A549 (cell line): ENCODE measurements at regions of chr7 and their contacts with region 1.

Region 1: GRCh38 chr7:31373337-31374289 is 33.1 kb upstream of the NEUROD6 start:
- DNase-seq: peak; percentile 76 to 78
- ATAC-seq: peak; percentile 98 to 99
- H3K4me3 ChIP-seq: no peak overlapping the region
- H3K27ac ChIP-seq: peak overlapping the region in 1 of 2 experiments; percentile 19; a peak in 3 of 6 replicates
- H3K4me1 ChIP-seq: no peaks in the 10 kb centered on the region
- CTCF ChIP-seq: peak; percentile 91
- EP300 ChIP-seq: no peak
- POLR2A ChIP-seq: no peak
- RAD21 ChIP-seq: peak; percentile 94 to 95

Region 2: GRCh38 chr7:31192986-31193385 is 180.6 kb before region 1 on chr7:
- CTCF ChIA-PET with region 1: interaction called, 35 read pairs
- POLR2A ChIA-PET with region 1: no interaction called
- DNase-seq: peak; percentile 61 to 66
- ATAC-seq: peak; percentile 100
- H3K4me3 ChIP-seq: no peak overlapping the region
- H3K27ac ChIP-seq: no peak overlapping the region
- H3K4me1 ChIP-seq: no peaks in the 10 kb centered on the region
- CTCF ChIP-seq: peak; percentile 76
- EP300 ChIP-seq: no peak
- POLR2A ChIP-seq: no peak
- RAD21 ChIP-seq: peak; percentile 85 to 86

Region 3: DNA sequence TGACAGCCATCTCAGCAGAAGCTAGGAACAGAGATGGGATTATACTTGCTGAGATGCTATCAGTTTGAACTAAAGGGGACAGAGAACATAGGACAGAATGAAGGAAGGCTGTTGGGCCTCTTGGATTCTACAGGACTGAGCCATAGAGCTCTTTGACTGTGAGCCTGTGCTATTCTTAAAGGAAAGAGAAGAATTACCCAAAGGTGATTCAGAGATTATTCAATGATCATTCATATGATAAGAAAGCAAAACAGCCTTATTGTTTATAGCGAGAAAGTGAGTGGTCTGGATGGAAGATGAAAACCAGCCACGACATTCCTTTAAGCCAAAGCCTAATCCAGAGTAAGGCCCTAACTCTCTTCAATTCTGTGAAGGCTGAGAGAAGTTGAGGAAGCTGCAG is 36.7 kb after region 1 on chr7:
- CTCF ChIA-PET with region 1: interaction called, 13 read pairs
- POLR2A ChIA-PET with region 1: no interaction called
- DNase-seq: no peak
- ATAC-seq: peak in 1 of 2 experiments; percentile 23; a peak in 2 of 6 replicates
- H3K4me3 ChIP-seq: no peak overlapping the region
- H3K27ac ChIP-seq: peak overlapping the region; percentile 13 to 85; a peak in 4 of 6 replicates
- H3K4me1 ChIP-seq: peaks cover 29% of the 10 kb centered on the region
- CTCF ChIP-seq: no peak
- EP300 ChIP-seq: no peak
- POLR2A ChIP-seq: no peak
- RAD21 ChIP-seq: no peak

Region 4: GRCh38 chr7:31443457-31443856 is 69.8 kb after region 1 on chr7:
- CTCF ChIA-PET with region 1: interaction called, 83 read pairs
- POLR2A ChIA-PET with region 1: no interaction called
- DNase-seq: peak; percentile 60 to 68
- ATAC-seq: peak; percentile 84 to 93
- H3K4me3 ChIP-seq: no peak overlapping the region
- H3K27ac ChIP-seq: no peak overlapping the region
- H3K4me1 ChIP-seq: no peaks in the 10 kb centered on the region
- CTCF ChIP-seq: peak; percentile 90
- EP300 ChIP-seq: no peak
- POLR2A ChIP-seq: no peak
- RAD21 ChIP-seq: peak; percentile 80 to 86

Region 5: GRCh38 chr7:31488562-31489203 is 115.1 kb after region 1 on chr7:
- CTCF ChIA-PET with region 1: interaction called, 128 read pairs
- POLR2A ChIA-PET with region 1: no interaction called
- DNase-seq: peak; percentile 65 to 69
- ATAC-seq: peak; percentile 98 to 100
- H3K4me3 ChIP-seq: no peak overlapping the region
- H3K27ac ChIP-seq: no peak overlapping the region
- H3K4me1 ChIP-seq: no peaks in the 10 kb centered on the region
- CTCF ChIP-seq: peak; percentile 83
- EP300 ChIP-seq: no peak
- POLR2A ChIP-seq: no peak
- RAD21 ChIP-seq: peak; percentile 89 to 92

Region 6: GRCh38 chr7:31540721-31541120 is 167.1 kb after region 1 on chr7:
- CTCF ChIA-PET with region 1: no interaction called
- POLR2A ChIA-PET with region 1: no interaction called
- DNase-seq: no peak
- ATAC-seq: no peak
- H3K4me3 ChIP-seq: no peak overlapping the region
- H3K27ac ChIP-seq: no peak overlapping the region
- H3K4me1 ChIP-seq: no peaks in the 10 kb centered on the region
- CTCF ChIP-seq: no peak
- EP300 ChIP-seq: no peak
- POLR2A ChIP-seq: no peak
- RAD21 ChIP-seq: no peak

Region 7: DNA sequence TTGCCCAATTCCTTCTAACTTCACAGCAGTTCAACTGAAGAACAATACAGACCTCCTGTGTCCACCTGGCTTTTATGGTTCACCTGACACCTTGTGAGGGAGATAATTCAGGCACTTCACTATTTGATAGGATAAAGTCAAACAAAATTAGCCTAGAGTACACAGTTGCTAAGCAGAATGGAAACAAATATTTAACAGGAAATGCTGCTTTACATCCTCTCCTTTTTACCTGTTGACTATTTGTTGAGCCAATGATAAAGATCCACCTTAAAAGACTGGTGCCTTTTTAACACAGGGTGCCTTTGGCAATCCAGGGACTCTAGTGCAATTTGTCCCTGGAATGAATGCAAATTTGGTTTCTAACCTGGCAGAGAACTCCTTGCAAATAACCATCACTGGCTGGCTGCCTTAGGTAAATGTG is 180.1 kb after region 1 on chr7:
- CTCF ChIA-PET with region 1: no interaction called
- POLR2A ChIA-PET with region 1: no interaction called
- DNase-seq: no peak
- ATAC-seq: no peak
- H3K4me3 ChIP-seq: no peak overlapping the region
- H3K27ac ChIP-seq: no peak overlapping the region
- H3K4me1 ChIP-seq: no peaks in the 10 kb centered on the region
- CTCF ChIP-seq: no peak
- EP300 ChIP-seq: no peak
- POLR2A ChIP-seq: no peak
- RAD21 ChIP-seq: no peak